ENCODE measurements at regions of chr4 and their contacts with region 1.

Region 1: DNA sequence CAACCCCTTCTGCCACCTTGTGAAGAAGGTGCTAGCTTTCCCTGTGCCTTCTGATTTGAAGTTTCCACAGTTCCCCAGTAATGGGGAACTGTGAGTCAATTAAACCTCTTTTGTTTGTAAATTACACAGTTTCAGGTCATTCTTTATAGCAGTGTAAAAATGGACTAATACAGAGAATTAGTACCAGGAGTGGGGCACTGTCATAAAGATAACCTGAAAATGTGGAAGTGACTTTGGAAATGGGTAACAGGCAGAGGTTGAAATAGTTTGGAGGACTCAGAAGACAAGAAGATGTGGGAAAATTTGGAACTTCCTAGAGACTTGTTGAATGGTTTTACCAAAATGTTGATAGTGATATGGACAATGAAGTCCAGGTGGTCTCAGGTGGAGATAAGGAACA is 131.0 kb upstream of the HAND2 start:
- DNase-seq: no peak

Region 2: GRCh38 chr4:173647902-173648301 is 13.1 kb before region 1 on chr4:
- CTCF ChIA-PET with region 1: no interaction called
- POLR2A ChIA-PET with region 1: no interaction called
- DNase-seq: no peak

Region 3: DNA sequence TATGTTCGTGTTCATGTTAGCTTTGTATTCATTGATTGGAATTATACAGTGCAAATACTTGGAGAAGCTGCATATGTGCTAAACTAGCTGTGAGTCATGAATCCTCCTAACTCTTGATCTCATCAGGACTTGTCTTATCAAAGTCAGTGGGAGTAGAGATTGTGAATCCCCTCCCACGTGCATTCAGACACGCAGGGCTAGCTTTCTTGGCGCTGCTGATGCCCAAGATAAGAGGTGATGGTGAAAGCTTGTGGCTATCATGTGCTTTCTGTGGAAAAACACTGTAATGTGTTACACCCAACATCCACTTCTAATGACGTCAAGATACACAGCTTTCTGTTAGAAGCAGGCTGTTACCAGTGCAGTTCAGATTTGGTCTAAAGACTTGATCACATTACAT is 217.7 kb after region 1 on chr4:
- CTCF ChIA-PET with region 1: interaction called, 10 read pairs
- POLR2A ChIA-PET with region 1: no interaction called
- DNase-seq: peak; percentile 27

Measured in HEK293T (cell line).